Activated CD4-positive, alpha-beta memory T cell treated with anti-CD3 and anti-CD28 coated beads, Interleukin-2, amount 10 ng/mL, durations not matched to agents 7 days and 5 days (primary cell): ENCODE measurements at regions of chr17 and their contacts with region 1.

Region 1: GRCh38 chr17:50501054-50501453 is 7.2 kb upstream of the MYCBPAP start:
- DNase-seq: peak; percentile 34
- H3K4me3 Mint-ChIP-seq: no peak overlapping the region
- H3K27ac Mint-ChIP-seq: no peak overlapping the region
- H3K4me1 Mint-ChIP-seq: peaks cover 31% of the 10 kb centered on the region
- H3K27me3 Mint-ChIP-seq: peaks cover 3% of the 10 kb centered on the region

Region 2: DNA sequence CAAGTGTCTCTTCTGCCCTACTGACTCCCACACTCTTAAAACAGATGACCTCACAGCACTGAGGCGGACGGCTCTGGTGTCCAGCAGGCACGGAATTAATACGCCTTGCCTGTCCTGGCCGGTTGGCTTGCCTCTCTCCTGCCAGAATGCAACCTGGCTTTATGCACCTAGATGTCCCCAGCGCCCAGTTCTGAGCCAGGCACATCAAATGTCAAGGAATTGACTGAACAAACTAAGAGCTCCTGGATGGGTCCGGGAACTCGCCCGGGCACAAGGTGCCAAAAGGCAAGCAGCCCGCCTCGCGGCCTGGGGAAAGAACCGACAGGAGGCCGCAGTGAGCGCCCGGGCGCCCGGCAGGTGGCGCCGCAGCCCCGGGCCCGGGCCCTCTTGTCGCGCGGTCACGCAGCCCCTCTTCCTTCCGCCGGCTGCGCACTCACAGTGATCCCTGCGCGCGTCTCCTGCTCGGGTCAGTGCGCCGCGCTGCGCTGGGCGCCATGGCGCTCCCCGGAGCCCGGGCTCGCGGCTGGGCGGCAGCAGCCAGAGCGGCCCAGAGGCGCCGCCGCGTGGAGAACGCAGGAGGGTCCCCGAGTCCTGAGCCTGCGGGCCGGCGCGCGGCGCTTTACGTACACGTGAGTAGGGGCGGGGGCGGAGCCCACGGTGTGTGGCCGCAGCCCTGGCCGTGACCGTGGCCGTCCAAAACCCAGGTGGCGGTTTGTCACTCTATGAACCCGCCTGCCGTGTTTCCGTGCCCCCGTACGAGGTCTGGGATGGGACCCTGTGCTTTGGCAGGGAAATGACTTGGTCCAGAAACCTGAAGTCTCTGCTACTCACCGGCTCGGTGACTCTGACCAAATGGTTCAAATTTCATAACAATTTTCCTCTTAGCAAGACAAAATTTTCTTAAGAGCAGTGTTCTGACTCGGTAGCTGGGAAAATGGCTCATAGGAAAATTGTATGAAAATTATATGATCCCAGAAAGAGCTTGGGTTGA is 22.4 kb before region 1 on chr17 and contains the start of gene RSAD1:
- CTCF ChIA-PET with region 1: interaction called, 23 read pairs
- POLR2A ChIA-PET with region 1: interaction called, 6 read pairs
- DNase-seq: peak; percentile 90
- H3K4me3 Mint-ChIP-seq: peak within 1 kb of the TSS; percentile 82
- H3K27ac Mint-ChIP-seq: peak within 1 kb of the TSS; percentile 68
- H3K4me1 Mint-ChIP-seq: peaks cover 25% of the 10 kb centered on the region
- H3K27me3 Mint-ChIP-seq: peaks cover 3% of the 10 kb centered on the region
- total RNA-seq, gene RSAD1: 24.5 to 28.4 TPM

Region 3: DNA sequence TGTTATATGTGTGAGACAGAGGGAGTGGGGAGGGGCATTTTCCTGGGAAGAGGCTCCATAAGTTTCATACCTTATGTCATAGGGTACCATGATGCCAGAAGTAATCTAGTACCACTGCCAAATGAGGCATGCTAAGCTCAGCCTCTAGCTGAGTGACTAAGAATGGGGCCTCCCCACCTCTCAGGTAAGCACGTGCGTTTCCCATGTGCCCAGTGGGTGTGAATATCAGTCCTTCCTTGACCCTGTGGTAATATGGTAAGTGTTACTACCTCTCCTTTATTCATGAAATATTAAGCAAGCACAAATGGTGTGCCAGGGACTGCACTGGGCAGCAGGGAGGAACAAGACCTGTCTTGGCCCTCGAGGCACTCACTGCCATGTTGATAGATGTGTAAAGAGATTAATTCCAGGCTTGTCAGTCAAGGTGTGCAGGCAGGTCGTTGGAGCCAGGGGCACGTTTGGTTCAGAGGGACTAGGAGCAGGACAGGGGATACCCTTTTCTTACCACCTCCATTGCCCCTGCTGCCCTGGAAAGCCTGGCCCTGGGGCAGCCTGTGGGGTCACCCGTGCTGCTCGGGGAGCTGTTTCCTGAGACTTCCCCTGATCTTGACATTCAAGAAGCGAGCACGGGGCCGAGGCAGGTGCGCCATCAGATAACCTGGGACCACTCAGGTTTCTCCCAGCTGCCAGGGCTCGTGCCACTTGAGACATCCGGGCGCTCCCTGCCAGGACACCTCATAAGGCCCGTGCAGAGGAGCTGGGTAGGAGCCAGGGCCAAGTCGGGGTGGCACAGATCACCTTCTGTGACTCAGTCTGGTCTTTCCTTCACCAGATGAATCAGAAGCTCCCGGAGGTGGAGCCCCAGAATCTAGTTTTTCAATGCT is 13.6 kb before region 1 on chr17:
- CTCF ChIA-PET with region 1: interaction called, 17 read pairs
- POLR2A ChIA-PET with region 1: interaction called, 6 read pairs
- DNase-seq: no peak
- H3K4me3 Mint-ChIP-seq: no peak overlapping the region
- H3K27ac Mint-ChIP-seq: no peak overlapping the region
- H3K4me1 Mint-ChIP-seq: peaks cover 4% of the 10 kb centered on the region
- H3K27me3 Mint-ChIP-seq: no peaks in the 10 kb centered on the region

Region 4: DNA sequence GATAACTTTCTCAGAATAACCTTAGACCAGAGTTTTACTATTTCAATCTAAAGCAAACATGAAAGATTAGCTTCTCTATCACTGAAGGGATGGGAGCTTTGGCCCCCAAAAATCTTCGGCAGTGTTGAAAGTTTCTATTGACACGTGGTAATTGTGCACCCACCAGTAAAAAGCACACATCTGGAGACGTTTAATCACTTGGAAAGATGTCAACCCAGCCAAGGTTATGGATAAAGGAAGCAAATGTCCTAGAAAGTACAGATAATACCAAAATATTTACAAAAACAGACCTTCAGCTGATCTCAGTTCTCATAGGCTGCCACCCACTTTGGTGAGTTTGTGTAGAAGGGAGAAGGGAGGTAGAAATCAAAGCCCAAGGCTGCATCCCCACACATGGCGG is 12.4 kb after region 1 on chr17:
- CTCF ChIA-PET with region 1: interaction called, 24 read pairs
- POLR2A ChIA-PET with region 1: interaction called, 3 read pairs
- DNase-seq: no peak
- H3K4me3 Mint-ChIP-seq: no peak overlapping the region
- H3K27ac Mint-ChIP-seq: no peak overlapping the region
- H3K4me1 Mint-ChIP-seq: peaks cover 48% of the 10 kb centered on the region
- H3K27me3 Mint-ChIP-seq: no peaks in the 10 kb centered on the region